Activated CD4-positive, alpha-beta memory T cell treated with anti-CD3 and anti-CD28 coated beads, Interleukin-2, amount 10 ng/mL, durations not matched to agents 7 days and 5 days (primary cell): ENCODE measurements at regions of chr2 and their contacts with region 1.

Region 1: DNA sequence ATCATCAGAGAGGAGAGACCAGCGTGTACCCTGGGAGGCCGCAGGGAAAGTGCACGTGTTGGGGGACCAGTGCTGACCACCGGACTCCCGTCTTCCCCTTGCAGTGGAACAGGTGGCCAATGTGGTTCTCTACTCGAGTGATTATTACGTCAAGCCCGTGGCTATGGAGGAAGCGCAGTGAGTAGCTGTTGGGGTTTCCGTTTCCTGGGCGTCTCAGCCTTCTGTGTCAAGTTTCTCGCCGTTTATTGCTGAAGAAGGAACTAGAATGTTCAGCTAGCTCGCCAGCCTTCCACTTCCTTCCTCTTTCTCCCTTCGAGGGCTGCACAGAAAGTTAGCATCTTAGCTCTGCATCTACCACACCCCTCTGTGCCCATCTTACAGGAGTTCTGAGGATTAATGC is 22.8 kb upstream of the DGKD start:
- DNase-seq: peak; percentile 89
- H3K4me3 Mint-ChIP-seq: peak overlapping the region; percentile 33
- H3K27ac Mint-ChIP-seq: peak overlapping the region; percentile 96
- H3K4me1 Mint-ChIP-seq: peaks cover 52% of the 10 kb centered on the region
- H3K27me3 Mint-ChIP-seq: no peaks in the 10 kb centered on the region

Region 2: GRCh38 chr2:233321166-233321565 is 10.4 kb before region 1 on chr2:
- CTCF ChIA-PET with region 1: no interaction called
- POLR2A ChIA-PET with region 1: interaction called, 14 read pairs
- DNase-seq: no peak
- H3K4me3 Mint-ChIP-seq: no peak overlapping the region
- H3K27ac Mint-ChIP-seq: no peak overlapping the region
- H3K4me1 Mint-ChIP-seq: peaks cover 23% of the 10 kb centered on the region
- H3K27me3 Mint-ChIP-seq: peaks cover 34% of the 10 kb centered on the region

Region 3: DNA sequence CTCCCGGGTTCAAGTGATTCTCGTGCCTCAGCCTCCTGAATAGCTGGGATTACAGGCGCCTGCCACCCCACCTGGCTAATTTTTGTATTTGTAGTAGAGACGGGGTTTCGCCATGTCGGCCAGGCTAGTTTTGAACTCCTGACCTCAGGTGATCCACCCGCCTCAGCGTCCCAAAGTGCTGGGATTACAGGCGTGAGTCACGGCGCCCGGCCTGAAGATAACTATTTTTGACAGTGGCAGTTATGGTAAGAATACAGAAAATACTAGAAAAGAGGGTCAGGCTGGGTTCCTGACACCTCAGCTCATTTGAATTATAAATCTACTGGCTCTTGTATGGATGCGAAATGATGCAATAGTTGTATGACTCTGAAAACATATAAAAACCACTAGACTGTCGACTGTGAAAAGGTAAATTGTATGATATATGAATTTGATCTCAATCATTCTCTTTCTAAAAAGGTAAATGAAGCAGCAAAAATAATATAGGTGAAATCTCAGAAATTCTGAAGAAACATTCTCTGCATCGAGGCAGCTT is 11.7 kb after region 1 on chr2:
- CTCF ChIA-PET with region 1: interaction called, 10 read pairs
- POLR2A ChIA-PET with region 1: interaction called, 6 read pairs
- DNase-seq: no peak
- H3K4me3 Mint-ChIP-seq: no peak overlapping the region
- H3K27ac Mint-ChIP-seq: no peak overlapping the region
- H3K4me1 Mint-ChIP-seq: peaks cover 8% of the 10 kb centered on the region
- H3K27me3 Mint-ChIP-seq: peaks cover 22% of the 10 kb centered on the region

Region 4: DNA sequence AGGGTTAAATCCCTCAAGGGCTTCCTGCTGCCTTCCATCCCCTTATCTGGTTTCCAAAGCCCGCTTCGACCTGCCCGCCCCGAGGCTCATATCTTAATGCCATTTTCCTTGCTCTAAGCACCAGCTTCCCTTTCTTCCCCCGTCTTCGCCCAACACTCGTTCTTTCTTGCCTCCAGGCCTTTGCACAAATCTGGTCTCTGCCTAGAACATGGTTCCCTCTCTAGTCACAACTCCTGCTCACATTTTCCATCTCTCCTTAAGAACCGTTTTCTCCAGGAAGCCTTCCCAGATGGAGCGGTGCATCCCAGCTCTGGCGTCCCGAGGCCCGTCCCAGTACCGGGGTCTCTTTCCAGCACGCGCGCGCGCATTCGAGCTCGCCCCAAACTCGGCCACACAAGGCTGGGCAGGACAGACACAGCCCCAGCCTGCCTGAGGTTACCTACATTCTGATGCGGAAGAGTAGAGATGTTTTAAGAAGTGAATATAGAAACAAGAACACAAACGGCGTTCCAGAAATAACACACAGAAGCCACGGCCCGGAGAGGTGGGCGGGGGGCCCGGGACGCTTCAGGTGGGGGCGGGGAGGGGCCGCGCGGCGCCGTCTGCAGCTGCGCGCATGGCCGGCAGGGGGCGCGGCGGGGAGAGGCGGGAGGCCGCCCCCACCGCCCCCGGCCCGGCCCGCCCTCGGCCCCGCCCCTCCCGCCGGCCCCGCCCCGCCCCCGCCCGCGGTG is 22.4 kb after region 1 on chr2 and contains the start of gene DGKD:
- CTCF ChIA-PET with region 1: interaction called, 18 read pairs
- POLR2A ChIA-PET with region 1: interaction called, 12 read pairs
- DNase-seq: peak; percentile 77
- H3K4me3 Mint-ChIP-seq: peak within 1 kb of the TSS; percentile 86
- H3K27ac Mint-ChIP-seq: peak within 1 kb of the TSS; percentile 84
- H3K4me1 Mint-ChIP-seq: peaks cover 75% of the 10 kb centered on the region
- H3K27me3 Mint-ChIP-seq: no peaks in the 10 kb centered on the region
- total RNA-seq, gene DGKD: 77.8 to 78.3 TPM

Region 5: GRCh38 chr2:233418761-233419625 is 87.5 kb after region 1 on chr2:
- CTCF ChIA-PET with region 1: no interaction called
- POLR2A ChIA-PET with region 1: interaction called, 12 read pairs
- DNase-seq: peak; percentile 65
- H3K4me3 Mint-ChIP-seq: peak overlapping the region; percentile 76
- H3K27ac Mint-ChIP-seq: peak overlapping the region; percentile 99
- H3K4me1 Mint-ChIP-seq: peaks cover 97% of the 10 kb centered on the region
- H3K27me3 Mint-ChIP-seq: no peaks in the 10 kb centered on the region